ENCODE measurements at regions of chr12 and their contacts with region 1.

Region 1: DNA sequence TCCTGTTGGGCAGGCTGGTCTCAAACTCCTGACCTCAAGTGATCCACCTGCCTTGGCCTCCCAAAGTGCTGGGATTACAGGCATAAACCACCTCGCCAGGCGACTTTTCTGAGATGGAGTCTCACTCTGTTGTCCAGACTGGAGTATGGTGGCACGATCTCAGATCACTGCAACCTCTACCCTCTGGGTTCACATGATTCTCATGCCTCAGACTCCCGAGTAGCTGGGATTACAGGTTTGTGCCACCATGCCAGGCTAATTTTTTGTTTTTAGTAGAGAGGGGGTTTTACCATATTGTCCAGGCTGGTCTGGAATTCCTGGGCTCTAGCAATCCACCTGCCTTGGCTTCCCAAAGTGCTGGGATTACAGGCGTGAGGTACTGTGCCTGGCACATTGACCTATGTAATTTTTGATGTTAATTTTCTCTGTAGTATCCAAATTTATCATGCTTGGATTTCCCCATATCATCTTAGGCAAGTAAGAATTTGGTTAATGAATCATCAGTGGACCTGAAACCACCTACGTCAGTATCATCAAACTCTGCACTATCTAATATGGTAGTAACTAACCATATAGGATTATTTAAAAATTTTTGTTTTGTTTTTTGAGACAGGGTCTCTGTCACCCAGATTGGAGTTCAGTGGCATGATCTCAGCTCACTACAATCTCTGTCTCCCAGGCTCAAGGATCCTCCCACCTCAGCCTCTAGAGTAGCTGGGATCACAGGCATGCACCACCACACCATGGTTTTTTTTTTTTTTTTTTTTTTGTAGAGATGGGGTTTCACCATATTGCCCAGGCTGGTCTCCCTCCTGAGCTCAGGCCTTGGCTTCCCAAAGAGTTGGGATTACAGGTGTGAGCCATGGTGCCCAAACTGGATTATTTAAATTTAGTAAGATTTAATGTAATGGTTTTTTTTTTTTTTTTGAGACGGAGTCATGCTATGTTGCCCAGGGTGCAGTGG is 11.9 kb upstream of the ATP5F1B start:
- DNase-seq: no peak
- ATAC-seq: peak; percentile 73
- H3K4me3 Mint-ChIP-seq: peak overlapping the region; percentile 64
- H3K27ac Mint-ChIP-seq: peak overlapping the region; percentile 89
- H3K4me1 Mint-ChIP-seq: peaks cover 35% of the 10 kb centered on the region
- H3K27me3 Mint-ChIP-seq: no peaks in the 10 kb centered on the region
- CTCF ChIP-seq: no peak

Region 2: DNA sequence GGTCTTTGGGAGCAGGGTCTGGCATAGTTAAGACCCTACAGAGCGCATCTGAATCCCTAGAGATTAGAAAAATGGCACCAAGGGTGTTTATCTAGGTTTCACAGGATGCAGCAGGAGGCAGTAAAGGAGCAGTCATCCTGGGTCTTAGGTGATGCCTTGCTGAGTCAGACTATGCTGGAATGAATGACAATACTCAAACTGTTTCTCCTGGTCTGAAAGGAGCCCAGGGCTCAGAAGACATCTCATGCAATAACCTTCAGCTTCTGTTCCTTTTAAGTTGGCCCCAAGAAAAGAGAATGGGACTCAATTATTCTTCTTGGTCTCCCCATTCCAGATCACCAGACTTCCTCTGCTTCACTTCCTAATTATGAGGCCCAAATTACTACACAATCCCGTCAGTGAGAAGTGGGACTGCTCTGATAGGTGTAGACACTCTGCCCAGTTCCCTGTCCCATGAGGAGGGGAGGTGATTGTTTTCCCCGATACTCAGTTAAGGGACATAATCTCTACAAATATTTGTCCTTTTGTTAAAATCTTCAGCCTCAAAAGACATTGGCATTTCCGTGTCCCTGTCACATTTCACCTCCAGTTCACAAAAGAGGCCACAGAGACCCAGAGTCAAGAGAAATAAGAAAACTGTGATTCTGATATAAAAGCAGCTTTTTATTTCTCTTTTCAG is 280.2 kb before region 1 on chr12:
- CTCF ChIA-PET with region 1: no interaction called
- POLR2A ChIA-PET with region 1: no interaction called
- intact Hi-C with region 1: no loop called
- DNase-seq: no peak
- ATAC-seq: no peak
- H3K4me3 Mint-ChIP-seq: no peak overlapping the region
- H3K27ac Mint-ChIP-seq: peak overlapping the region; percentile 94
- H3K4me1 Mint-ChIP-seq: peaks cover 53% of the 10 kb centered on the region
- H3K27me3 Mint-ChIP-seq: no peaks in the 10 kb centered on the region
- CTCF ChIP-seq: no peak

Region 3: GRCh38 chr12:56630160-56630632 is 27.5 kb before region 1 on chr12 and contains the start of gene BAZ2A:
- CTCF ChIA-PET with region 1: no interaction called
- POLR2A ChIA-PET with region 1: interaction called, 96 read pairs
- intact Hi-C with region 1: loop called (anchors 1 kb)
- DNase-seq: peak; percentile 74
- ATAC-seq: peak; percentile 62
- H3K4me3 Mint-ChIP-seq: peak within 1 kb of the TSS; percentile 96
- H3K27ac Mint-ChIP-seq: peak within 1 kb of the TSS; percentile 88
- H3K4me1 Mint-ChIP-seq: peaks cover 80% of the 10 kb centered on the region
- H3K27me3 Mint-ChIP-seq: no peaks in the 10 kb centered on the region
- CTCF ChIP-seq: no peak
- total RNA-seq, gene BAZ2A: 153 and 192 TPM in 2 replicates

Region 4: GRCh38 chr12:56695327-56696101 is 37.8 kb after region 1 on chr12:
- CTCF ChIA-PET with region 1: no interaction called
- POLR2A ChIA-PET with region 1: interaction called, 11 read pairs
- intact Hi-C with region 1: no loop called
- DNase-seq: no peak
- ATAC-seq: no peak
- H3K4me3 Mint-ChIP-seq: no peak overlapping the region
- H3K27ac Mint-ChIP-seq: no peak overlapping the region
- H3K4me1 Mint-ChIP-seq: peaks cover under 1% of the 10 kb centered on the region
- H3K27me3 Mint-ChIP-seq: no peaks in the 10 kb centered on the region
- CTCF ChIP-seq: no peak

Region 5: GRCh38 chr12:56900583-56900982 is 242.9 kb after region 1 on chr12:
- CTCF ChIA-PET with region 1: no interaction called
- POLR2A ChIA-PET with region 1: no interaction called
- intact Hi-C with region 1: no loop called
- DNase-seq: no peak
- ATAC-seq: no peak
- H3K4me3 Mint-ChIP-seq: no peak overlapping the region
- H3K27ac Mint-ChIP-seq: no peak overlapping the region
- H3K4me1 Mint-ChIP-seq: no peaks in the 10 kb centered on the region
- H3K27me3 Mint-ChIP-seq: peaks cover 7% of the 10 kb centered on the region
- CTCF ChIP-seq: no peak